ENCODE measurements at regions of chr12 and their contacts with region 1.

Region 1: DNA sequence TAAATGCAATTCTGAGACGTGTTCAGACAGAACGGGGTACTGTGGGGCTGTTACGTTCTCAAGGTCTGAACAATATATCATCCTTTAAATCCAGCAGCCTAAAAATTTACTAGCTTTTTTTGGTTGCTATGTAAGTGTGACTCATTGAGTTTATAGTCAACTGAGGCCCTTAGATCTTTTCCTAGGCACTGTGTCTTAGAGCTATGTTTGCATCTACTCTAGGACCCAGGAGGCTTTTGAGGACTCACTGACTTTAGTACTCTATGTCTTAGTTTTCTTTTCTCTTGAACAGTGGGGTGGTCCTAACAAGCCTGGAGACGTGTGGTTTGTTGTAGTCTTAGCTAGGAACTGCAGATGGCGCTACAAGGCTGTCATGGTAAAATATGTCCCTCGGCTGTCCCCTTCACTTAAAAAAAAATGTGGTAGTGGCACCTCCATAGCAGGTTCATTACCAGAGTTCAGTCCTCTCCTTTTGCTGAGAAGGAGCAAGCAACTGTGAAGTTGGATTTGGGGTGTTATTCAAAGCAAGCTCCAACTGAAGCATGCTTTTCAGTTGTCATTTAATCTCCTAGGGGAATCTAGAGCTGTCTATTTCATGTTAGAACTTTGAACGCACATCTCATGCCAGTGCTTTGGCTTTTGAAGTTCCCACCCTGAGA is 8.7 kb upstream of the SPATS2 start:
- DNase-seq: peak; percentile 52 to 65 (median 64)
- H3K4me3 ChIP-seq: no peak overlapping the region
- H3K4me3 Mint-ChIP-seq: no peak overlapping the region
- H3K27ac ChIP-seq: no peak overlapping the region
- H3K27ac Mint-ChIP-seq: no peak overlapping the region
- H3K4me1 ChIP-seq: no peaks in the 10 kb centered on the region
- H3K4me1 Mint-ChIP-seq: peaks cover 2% of the 10 kb centered on the region
- H3K27me3 ChIP-seq: peaks cover 2 to 7% of the 10 kb centered on the region in 2 donors
- H3K27me3 Mint-ChIP-seq: peaks cover 6 to 28% (median 21%) of the 10 kb centered on the region in 3 donors
- CTCF ChIP-seq: peak; percentile 89

Region 2: GRCh38 chr12:49580572-49581535 is 222.2 kb after region 1 on chr12:
- intact Hi-C with region 1: loop called in 1 of 2 experiments (anchors 5 kb)
- DNase-seq: peak; percentile 33 to 47 (median 46)
- H3K4me3 ChIP-seq: no peak overlapping the region
- H3K4me3 Mint-ChIP-seq: peak overlapping the region in 1 of 2 donors; percentile 35
- H3K27ac ChIP-seq: peak overlapping the region in 1 of 2 donors; percentile 5
- H3K27ac Mint-ChIP-seq: peak overlapping the region in 1 of 7 donors; percentile 31
- H3K4me1 ChIP-seq: no peaks in the 10 kb centered on the region
- H3K4me1 Mint-ChIP-seq: peaks cover 8% of the 10 kb centered on the region
- H3K27me3 ChIP-seq: no peaks in the 10 kb centered on the region
- H3K27me3 Mint-ChIP-seq: peaks cover 0 to 1% (median 0%) of the 10 kb centered on the region in 3 donors
- CTCF ChIP-seq: peak; percentile 86

Measured in CD14-positive monocyte (primary cell).